Activated CD4-positive, alpha-beta memory T cell treated with anti-CD3 and anti-CD28 coated beads for 36 hours (primary cell): ENCODE measurements at regions of chr2 and their contacts with region 1.

Region 1: GRCh38 chr2:191691016-191691735 is 13.2 kb downstream of the NABP1 start:
- DNase-seq: peak; percentile 31
- H3K4me3 Mint-ChIP-seq: no peak overlapping the region
- H3K27ac Mint-ChIP-seq: peak overlapping the region; percentile 60
- H3K4me1 Mint-ChIP-seq: peaks cover 55% of the 10 kb centered on the region
- H3K27me3 Mint-ChIP-seq: no peaks in the 10 kb centered on the region

Region 2: GRCh38 chr2:191617575-191617974 is 73.6 kb before region 1 on chr2:
- CTCF ChIA-PET with region 1: no interaction called
- POLR2A ChIA-PET with region 1: interaction called, 4 read pairs
- intact Hi-C with region 1: loop called (anchors 1 kb)
- DNase-seq: peak; percentile 61
- H3K4me3 Mint-ChIP-seq: peak overlapping the region; percentile 34
- H3K27ac Mint-ChIP-seq: peak overlapping the region; percentile 94
- H3K4me1 Mint-ChIP-seq: peaks cover 58% of the 10 kb centered on the region
- H3K27me3 Mint-ChIP-seq: no peaks in the 10 kb centered on the region

Region 3: DNA sequence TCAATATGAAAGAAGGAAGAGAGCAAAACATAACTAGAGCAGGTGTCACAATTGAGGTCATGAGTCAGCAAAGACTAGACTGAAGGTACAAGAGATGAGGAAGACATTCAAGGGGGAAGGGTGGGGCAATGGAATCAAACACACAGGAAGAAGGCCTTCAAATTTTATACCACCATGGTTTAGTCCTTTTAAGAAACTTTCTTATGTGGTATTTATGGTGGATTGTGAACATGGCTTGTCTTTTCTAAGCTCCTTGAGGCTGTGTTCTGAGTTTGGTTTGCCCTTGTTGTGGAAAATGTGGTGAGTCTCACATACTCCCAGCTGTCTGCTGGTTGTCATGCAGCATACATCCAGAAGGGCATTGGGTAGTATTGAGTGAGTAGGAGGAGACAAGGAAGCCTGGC is 48.8 kb after region 1 on chr2:
- CTCF ChIA-PET with region 1: no interaction called
- POLR2A ChIA-PET with region 1: no interaction called
- intact Hi-C with region 1: loop called (anchors 2 kb)
- DNase-seq: peak; percentile 54
- H3K4me3 Mint-ChIP-seq: no peak overlapping the region
- H3K27ac Mint-ChIP-seq: peak overlapping the region; percentile 50
- H3K4me1 Mint-ChIP-seq: peaks cover 15% of the 10 kb centered on the region
- H3K27me3 Mint-ChIP-seq: peaks cover 2% of the 10 kb centered on the region

Region 4: DNA sequence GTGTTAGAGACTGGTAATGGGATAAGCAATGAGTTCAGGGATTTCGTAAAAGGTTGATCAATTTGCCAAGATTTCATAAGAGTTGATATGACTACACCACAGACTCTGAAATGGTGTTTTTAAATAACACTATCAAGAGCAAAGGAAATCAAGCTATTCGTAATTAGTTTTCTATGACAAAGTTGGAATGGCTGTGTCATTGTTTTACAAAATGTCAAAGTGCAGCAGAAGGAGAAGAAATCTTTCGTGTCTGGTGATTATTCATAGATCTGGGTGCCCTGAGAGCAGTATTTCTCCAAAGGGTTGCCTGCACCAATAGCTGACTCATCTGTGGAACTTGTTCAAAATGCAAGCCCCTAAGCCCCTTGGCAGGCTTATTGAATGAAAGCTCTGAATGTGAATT is 56.9 kb after region 1 on chr2:
- CTCF ChIA-PET with region 1: no interaction called
- POLR2A ChIA-PET with region 1: no interaction called
- intact Hi-C with region 1: loop called (anchors 1 kb)
- DNase-seq: no peak
- H3K4me3 Mint-ChIP-seq: no peak overlapping the region
- H3K27ac Mint-ChIP-seq: no peak overlapping the region
- H3K4me1 Mint-ChIP-seq: peaks cover 15% of the 10 kb centered on the region
- H3K27me3 Mint-ChIP-seq: peaks cover 4% of the 10 kb centered on the region